Gastrocnemius medialis (tissue), 4 donors: ENCODE measurements at regions of chr20 and their contacts with region 1.

Region 1: DNA sequence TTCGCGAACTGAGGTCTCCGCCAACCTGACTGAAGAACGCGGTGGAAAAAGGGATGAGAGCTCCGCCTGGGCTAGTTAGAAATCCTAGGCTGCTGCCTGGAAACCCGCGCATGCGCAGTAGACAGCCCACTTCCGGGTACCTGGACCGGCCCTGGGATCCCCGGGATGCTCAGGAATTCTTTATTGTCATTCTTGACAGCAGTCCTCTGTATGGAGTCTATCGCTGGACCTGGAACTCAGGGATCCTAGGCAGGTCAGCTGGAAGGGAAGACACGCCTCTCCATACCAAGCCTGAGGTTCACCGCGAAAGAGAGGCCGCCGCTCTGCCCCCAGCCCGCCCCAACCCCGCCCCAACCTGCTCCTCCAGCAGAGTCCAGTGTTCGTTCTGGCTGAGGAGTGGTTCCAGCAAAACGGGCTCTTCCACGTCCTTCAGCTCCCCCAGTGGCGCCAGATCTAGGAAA is 1379.2 kb upstream of the DEFB115 start:
- DNase-seq: no peak
- ATAC-seq: peak in 1 of 2 donors; percentile 26
- H3K4me3 ChIP-seq: no peak overlapping the region
- H3K27ac ChIP-seq: no peak overlapping the region
- H3K4me1 ChIP-seq: no peaks in the 10 kb centered on the region
- H3K27me3 ChIP-seq: no peaks in the 10 kb centered on the region
- CTCF ChIP-seq: no peak
- POLR2A ChIP-seq: no peak

Region 2: DNA sequence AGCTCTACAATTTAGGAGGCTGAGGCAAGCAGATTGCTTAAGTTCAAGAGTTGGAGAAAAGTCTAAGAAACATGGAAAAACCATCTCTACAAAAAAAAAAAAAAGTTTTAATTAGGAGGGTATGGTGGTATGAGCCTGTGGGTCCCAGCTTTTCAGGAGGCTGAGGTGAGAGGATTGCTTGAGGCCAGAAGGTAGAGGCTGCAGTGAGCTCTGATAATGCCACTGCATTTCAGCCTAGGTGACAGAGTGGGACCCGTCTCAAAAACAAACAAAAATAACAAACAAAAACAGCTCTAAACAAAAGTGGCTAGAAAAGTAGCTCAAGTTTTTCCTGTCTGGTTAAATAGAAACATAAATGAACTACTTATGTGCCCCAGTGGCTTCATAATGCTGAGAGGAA is 754.5 kb before region 1 on chr20:
- in situ Hi-C with region 1: no loop called
- intact Hi-C with region 1: loop called (anchors 10 kb)
- DNase-seq: no peak
- ATAC-seq: no peak
- H3K4me3 ChIP-seq: no peak overlapping the region
- H3K27ac ChIP-seq: no peak overlapping the region
- H3K4me1 ChIP-seq: no peaks in the 10 kb centered on the region
- H3K27me3 ChIP-seq: no peaks in the 10 kb centered on the region
- CTCF ChIP-seq: no peak
- POLR2A ChIP-seq: no peak

Region 3: DNA sequence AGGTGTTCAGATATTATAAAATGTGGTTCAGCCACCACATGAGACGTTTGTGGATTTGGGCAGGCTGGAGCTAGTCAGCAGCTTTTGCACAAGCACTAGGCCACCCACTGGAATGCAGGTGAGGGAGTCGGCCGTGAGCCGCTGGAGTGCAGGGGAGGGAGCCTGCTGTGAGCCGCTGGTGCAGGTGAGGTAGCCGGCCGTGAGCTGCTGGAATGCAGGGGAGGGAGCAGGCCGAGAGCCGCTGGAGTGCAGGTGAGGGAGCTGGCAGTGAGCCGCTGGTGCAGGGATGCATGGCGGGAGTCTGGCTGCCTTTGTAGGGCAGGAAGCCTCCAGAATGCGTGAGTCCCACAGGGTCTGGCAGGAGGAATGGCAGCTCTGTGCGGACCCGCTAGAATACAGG is 528.5 kb before region 1 on chr20:
- in situ Hi-C with region 1: no loop called
- intact Hi-C with region 1: no loop called
- DNase-seq: no peak
- ATAC-seq: no peak
- H3K4me3 ChIP-seq: no peak overlapping the region
- H3K27ac ChIP-seq: no peak overlapping the region
- H3K4me1 ChIP-seq: no peaks in the 10 kb centered on the region
- H3K27me3 ChIP-seq: no peaks in the 10 kb centered on the region
- CTCF ChIP-seq: no peak
- POLR2A ChIP-seq: no peak

Region 4: DNA sequence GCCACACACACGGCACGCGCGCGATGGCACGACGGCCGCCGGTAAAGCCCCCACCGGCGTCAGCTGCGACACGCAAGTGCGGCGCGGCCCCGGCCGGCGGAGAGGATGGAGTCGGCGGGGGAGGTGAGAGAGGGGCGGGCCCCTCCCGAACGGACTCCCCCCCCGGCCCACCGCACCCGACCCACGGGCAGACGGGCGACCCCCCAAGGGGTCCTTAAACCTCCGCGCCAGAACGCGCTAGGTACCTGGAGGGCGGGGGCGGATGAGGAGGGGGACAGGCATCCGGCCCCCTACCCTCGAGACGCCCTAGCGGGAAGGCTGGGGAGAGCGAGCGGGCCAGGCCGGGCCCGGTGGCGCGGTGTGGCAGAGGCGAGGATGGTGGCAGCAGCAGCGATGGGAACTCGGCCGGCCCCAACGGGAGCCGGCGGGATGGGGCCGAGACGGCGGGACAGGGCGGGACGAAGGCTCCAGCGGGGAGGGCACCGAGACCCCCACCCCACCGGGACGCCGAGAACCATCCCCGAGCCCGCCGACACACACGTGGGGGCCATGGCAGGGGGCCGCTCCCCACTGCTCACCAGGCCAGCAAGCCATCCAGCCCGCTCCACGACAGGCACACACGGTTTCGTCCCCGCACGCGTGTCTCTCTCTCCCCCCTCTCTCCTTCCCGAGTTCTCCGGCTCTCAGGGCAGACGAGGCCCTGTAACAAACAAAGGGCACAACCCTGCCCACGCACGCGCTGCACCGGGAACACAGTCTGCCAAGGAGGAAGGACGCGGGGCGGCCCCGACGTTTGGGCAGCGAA is 136.2 kb before region 1 on chr20:
- in situ Hi-C with region 1: no loop called
- intact Hi-C with region 1: no loop called
- DNase-seq: no peak
- ATAC-seq: no peak
- H3K4me3 ChIP-seq: no peak overlapping the region
- H3K27ac ChIP-seq: no peak overlapping the region
- H3K4me1 ChIP-seq: no peaks in the 10 kb centered on the region
- H3K27me3 ChIP-seq: peaks cover 0 to 6% (median 0%) of the 10 kb centered on the region in 3 donors
- CTCF ChIP-seq: no peak
- POLR2A ChIP-seq: no peak

Region 5: GRCh38 chr20:29790510-29790909 is 87.8 kb before region 1 on chr20:
- in situ Hi-C with region 1: no loop called
- intact Hi-C with region 1: no loop called
- DNase-seq: no peak
- ATAC-seq: no peak
- H3K4me3 ChIP-seq: no peak overlapping the region
- H3K27ac ChIP-seq: no peak overlapping the region
- H3K4me1 ChIP-seq: no peaks in the 10 kb centered on the region
- H3K27me3 ChIP-seq: no peaks in the 10 kb centered on the region
- CTCF ChIP-seq: no peak
- POLR2A ChIP-seq: no peak